Caco-2 (cell line): ENCODE measurements at regions of chr20 and their contacts with region 1.

Region 1: GRCh38 chr20:63223221-63224207 is 7.6 kb upstream of the YTHDF1 start:
- DNase-seq: peak; percentile 85
- H3K4me3 ChIP-seq: no peak overlapping the region
- H3K4me3 Mint-ChIP-seq: no peak overlapping the region
- H3K27ac Mint-ChIP-seq: no peak overlapping the region
- H3K4me1 ChIP-seq: peaks cover 12% of the 10 kb centered on the region; the same call in 1 of the 2 replicates
- H3K4me1 Mint-ChIP-seq: peaks cover 7% of the 10 kb centered on the region
- H3K27me3 ChIP-seq: no peaks in the 10 kb centered on the region
- H3K27me3 Mint-ChIP-seq: peaks cover 3% of the 10 kb centered on the region
- CTCF ChIP-seq: peak; percentile 96 to 99

Region 2: DNA sequence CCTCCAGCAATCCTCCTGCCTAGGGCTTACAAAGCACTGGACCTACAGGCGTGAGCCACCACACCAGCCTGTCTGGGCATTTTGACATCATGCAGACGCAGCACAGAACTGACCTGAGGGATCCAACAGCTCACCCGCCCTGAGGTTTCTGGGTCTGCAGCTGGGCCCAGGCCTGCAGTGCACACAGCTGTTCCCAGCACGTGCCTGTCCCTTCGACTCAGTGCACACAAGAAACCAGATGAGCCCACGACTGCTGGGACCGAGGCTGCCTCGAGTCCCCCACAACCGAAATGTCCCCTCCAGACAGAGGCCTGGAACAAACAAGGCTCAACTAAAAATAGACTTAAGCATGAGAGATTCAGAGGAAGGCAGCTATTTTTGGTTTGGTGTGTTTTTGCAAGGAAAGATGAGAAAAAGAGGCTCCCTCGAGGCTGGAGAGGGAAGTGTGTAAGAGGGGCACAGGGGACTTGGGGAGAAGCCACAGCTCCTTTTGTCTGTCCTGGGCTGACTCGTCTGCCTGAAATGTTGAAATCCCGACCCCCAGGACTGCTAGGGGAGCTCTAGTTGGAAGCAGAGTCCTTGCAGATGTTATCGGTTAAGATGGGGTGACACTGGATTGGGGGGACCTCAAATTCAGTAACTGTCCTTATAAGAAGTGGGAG is 73.9 kb before region 1 on chr20:
- CTCF ChIA-PET with region 1: no interaction called
- POLR2A ChIA-PET with region 1: no interaction called
- intact Hi-C with region 1: no loop called
- DNase-seq: peak in 1 of 2 experiments; percentile 35
- H3K4me3 ChIP-seq: no peak overlapping the region
- H3K4me3 Mint-ChIP-seq: no peak overlapping the region
- H3K27ac Mint-ChIP-seq: no peak overlapping the region
- H3K4me1 ChIP-seq: peaks cover 7% of the 10 kb centered on the region; the same call in 1 of the 2 replicates
- H3K4me1 Mint-ChIP-seq: no peaks in the 10 kb centered on the region
- H3K27me3 ChIP-seq: peaks cover 6% of the 10 kb centered on the region
- H3K27me3 Mint-ChIP-seq: peaks cover 26% of the 10 kb centered on the region
- CTCF ChIP-seq: no peak

Region 3: GRCh38 chr20:63234739-63235398 is 11.4 kb after region 1 on chr20:
- CTCF ChIA-PET with region 1: interaction called, 122 read pairs
- POLR2A ChIA-PET with region 1: no interaction called
- intact Hi-C with region 1: no loop called
- DNase-seq: peak; percentile 87 to 89
- H3K4me3 ChIP-seq: no peak overlapping the region
- H3K4me3 Mint-ChIP-seq: peak overlapping the region; percentile 34
- H3K27ac Mint-ChIP-seq: no peak overlapping the region
- H3K4me1 ChIP-seq: peaks cover 53% of the 10 kb centered on the region
- H3K4me1 Mint-ChIP-seq: peaks cover 24% of the 10 kb centered on the region
- H3K27me3 ChIP-seq: no peaks in the 10 kb centered on the region
- H3K27me3 Mint-ChIP-seq: no peaks in the 10 kb centered on the region
- CTCF ChIP-seq: peak; percentile 89 to 96

Region 4: GRCh38 chr20:63253438-63254236 is 30.1 kb after region 1 on chr20:
- CTCF ChIA-PET with region 1: interaction called, 23 read pairs
- POLR2A ChIA-PET with region 1: no interaction called
- intact Hi-C with region 1: loop called (anchors 1 kb)
- DNase-seq: no peak
- H3K4me3 ChIP-seq: peak overlapping the region; percentile 13
- H3K4me3 Mint-ChIP-seq: no peak overlapping the region
- H3K27ac Mint-ChIP-seq: no peak overlapping the region
- H3K4me1 ChIP-seq: peaks cover 56% of the 10 kb centered on the region
- H3K4me1 Mint-ChIP-seq: peaks cover 57% of the 10 kb centered on the region
- H3K27me3 ChIP-seq: no peaks in the 10 kb centered on the region
- H3K27me3 Mint-ChIP-seq: no peaks in the 10 kb centered on the region
- CTCF ChIP-seq: no peak

Region 5: DNA sequence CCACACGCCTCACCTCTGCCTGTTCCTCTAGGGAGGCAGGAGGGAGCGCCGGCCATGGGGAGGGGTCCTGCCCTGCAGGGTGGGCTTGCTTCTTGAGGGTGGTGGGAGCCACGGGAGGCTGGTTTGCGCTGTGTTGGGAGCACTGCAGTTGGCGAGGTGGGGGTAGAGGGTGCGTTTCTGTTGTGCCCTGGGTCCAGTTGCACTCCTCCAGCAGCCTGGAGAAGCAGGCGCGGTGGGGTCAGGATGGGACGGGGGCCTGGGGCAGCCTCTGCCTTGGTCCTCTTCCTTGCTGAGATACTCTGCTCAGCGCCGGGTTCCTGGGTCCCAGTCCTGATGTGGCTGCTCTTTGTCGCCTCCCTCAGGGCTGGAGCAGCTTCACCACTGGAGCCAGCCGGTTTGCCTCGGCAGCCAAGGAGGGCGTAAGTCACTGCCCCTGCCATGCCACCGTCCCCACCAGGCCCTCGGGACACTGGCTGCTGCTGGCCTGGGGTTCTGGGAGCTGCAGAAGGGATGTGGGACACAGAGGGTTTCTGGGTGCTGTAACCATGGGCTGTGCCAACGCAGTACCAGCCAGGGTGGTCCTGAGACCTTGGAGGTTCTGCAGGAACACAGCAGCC is 57.5 kb after region 1 on chr20:
- CTCF ChIA-PET with region 1: interaction called, 30 read pairs
- POLR2A ChIA-PET with region 1: no interaction called
- intact Hi-C with region 1: no loop called
- DNase-seq: peak in 1 of 2 experiments; percentile 64
- H3K4me3 ChIP-seq: no peak overlapping the region
- H3K4me3 Mint-ChIP-seq: no peak overlapping the region
- H3K27ac Mint-ChIP-seq: no peak overlapping the region
- H3K4me1 ChIP-seq: no peaks in the 10 kb centered on the region
- H3K4me1 Mint-ChIP-seq: no peaks in the 10 kb centered on the region
- H3K27me3 ChIP-seq: no peaks in the 10 kb centered on the region
- H3K27me3 Mint-ChIP-seq: no peaks in the 10 kb centered on the region
- CTCF ChIP-seq: peak; percentile 61 to 79

Region 6: GRCh38 chr20:63317601-63318291 is 94.2 kb after region 1 on chr20:
- CTCF ChIA-PET with region 1: interaction called, 10 read pairs
- POLR2A ChIA-PET with region 1: no interaction called
- intact Hi-C with region 1: no loop called
- DNase-seq: peak in 1 of 2 experiments; percentile 56
- H3K4me3 ChIP-seq: no peak overlapping the region
- H3K4me3 Mint-ChIP-seq: no peak overlapping the region
- H3K27ac Mint-ChIP-seq: no peak overlapping the region
- H3K4me1 ChIP-seq: peaks cover 5% of the 10 kb centered on the region; the same call in 1 of the 2 replicates
- H3K4me1 Mint-ChIP-seq: no peaks in the 10 kb centered on the region
- H3K27me3 ChIP-seq: peaks cover 1% of the 10 kb centered on the region; the same call in 1 of the 2 replicates
- H3K27me3 Mint-ChIP-seq: no peaks in the 10 kb centered on the region
- CTCF ChIP-seq: no peak